ENCODE measurements at regions of chr18 and their contacts with region 1.

Region 1: GRCh38 chr18:48030616-48031480 is 100.4 kb upstream of the SMAD2 start:
- DNase-seq: peak; percentile 80
- H3K4me3 Mint-ChIP-seq: no peak overlapping the region
- H3K27ac Mint-ChIP-seq: no peak overlapping the region
- H3K4me1 Mint-ChIP-seq: peaks cover 25% of the 10 kb centered on the region
- H3K27me3 Mint-ChIP-seq: no peaks in the 10 kb centered on the region
- CTCF ChIP-seq: peak; percentile 76

Region 2: DNA sequence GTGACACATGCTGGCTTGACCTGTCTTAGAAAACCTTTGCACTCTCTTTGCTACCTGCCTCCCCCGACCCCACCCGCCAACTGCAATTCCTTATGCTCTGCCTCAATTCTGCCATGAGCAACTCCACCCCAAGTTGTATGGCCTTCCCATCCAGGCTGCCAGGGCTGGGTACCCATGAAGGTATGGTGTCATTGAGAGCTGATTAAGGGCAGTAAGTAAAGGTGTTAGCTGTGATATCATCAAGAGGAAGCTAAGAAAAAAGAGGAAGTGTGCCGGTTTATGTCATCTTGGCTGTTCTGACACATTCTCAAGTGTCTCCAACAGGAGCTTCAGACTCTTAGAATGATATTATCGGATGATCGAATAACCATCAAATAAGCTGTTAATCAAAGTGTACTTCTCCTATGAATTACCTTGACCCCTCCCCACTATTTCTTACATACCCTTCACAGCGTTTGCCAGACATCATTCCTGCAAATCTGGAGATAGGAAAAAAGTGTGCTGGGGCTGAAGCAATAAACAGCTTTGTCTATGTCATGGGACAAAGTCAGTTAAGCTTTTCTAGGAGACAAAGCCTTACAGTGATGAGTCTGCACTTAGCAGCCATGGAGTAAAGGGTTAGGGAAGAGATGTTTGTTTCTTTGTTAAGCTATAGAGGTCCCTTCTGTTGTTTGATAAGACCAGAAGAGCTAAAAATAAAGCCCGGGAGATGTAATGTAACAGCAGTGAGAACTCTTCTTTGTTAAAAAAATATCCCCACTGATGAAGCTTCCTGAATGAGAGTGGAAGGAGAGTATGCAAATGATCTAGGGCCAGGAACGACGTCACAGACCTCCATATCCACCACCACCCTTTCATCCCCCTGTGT is 60.0 kb before region 1 on chr18:
- CTCF ChIA-PET with region 1: no interaction called
- POLR2A ChIA-PET with region 1: no interaction called
- intact Hi-C with region 1: no loop called
- DNase-seq: no peak
- H3K4me3 Mint-ChIP-seq: no peak overlapping the region
- H3K27ac Mint-ChIP-seq: no peak overlapping the region
- H3K4me1 Mint-ChIP-seq: peaks cover 6% of the 10 kb centered on the region
- H3K27me3 Mint-ChIP-seq: peaks cover 23% of the 10 kb centered on the region
- CTCF ChIP-seq: no peak

Region 3: DNA sequence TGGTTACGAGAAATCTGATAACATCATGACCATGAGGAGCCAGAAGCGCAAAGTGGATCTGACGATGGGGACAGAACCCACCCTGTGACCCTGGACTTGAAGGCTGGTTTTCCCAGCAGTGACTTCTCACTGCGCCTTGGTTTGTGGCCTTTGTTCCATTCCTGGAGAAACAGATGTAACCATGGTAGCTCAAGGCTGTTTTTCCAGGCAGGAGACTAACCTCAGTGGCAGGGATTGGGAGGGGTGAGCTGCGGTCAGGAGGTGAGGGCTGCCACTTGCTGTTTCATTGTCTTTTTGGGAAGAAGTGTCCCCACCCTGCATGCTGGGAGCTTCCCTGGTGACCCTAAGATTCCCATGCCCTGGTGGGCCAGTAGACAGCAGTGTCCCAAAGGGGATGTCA is 16.0 kb after region 1 on chr18:
- CTCF ChIA-PET with region 1: interaction called, 15 read pairs
- POLR2A ChIA-PET with region 1: no interaction called
- intact Hi-C with region 1: no loop called
- DNase-seq: no peak
- H3K4me3 Mint-ChIP-seq: no peak overlapping the region
- H3K27ac Mint-ChIP-seq: no peak overlapping the region
- H3K4me1 Mint-ChIP-seq: no peaks in the 10 kb centered on the region
- H3K27me3 Mint-ChIP-seq: no peaks in the 10 kb centered on the region
- CTCF ChIP-seq: no peak

Region 4: GRCh38 chr18:48153641-48154481 is 123.0 kb after region 1 on chr18:
- CTCF ChIA-PET with region 1: interaction called, 6 read pairs
- POLR2A ChIA-PET with region 1: no interaction called
- intact Hi-C with region 1: loop called (anchors 10 kb)
- DNase-seq: peak; percentile 85
- H3K4me3 Mint-ChIP-seq: no peak overlapping the region
- H3K27ac Mint-ChIP-seq: peak overlapping the region; percentile 84
- H3K4me1 Mint-ChIP-seq: peaks cover 50% of the 10 kb centered on the region
- H3K27me3 Mint-ChIP-seq: no peaks in the 10 kb centered on the region
- CTCF ChIP-seq: no peak

Region 5: GRCh38 chr18:48230467-48231113 is 199.7 kb after region 1 on chr18:
- CTCF ChIA-PET with region 1: interaction called, 20 read pairs
- POLR2A ChIA-PET with region 1: no interaction called
- intact Hi-C with region 1: loop called (anchors 1 kb)
- DNase-seq: peak; percentile 78
- H3K4me3 Mint-ChIP-seq: no peak overlapping the region
- H3K27ac Mint-ChIP-seq: no peak overlapping the region
- H3K4me1 Mint-ChIP-seq: peaks cover 29% of the 10 kb centered on the region
- H3K27me3 Mint-ChIP-seq: peaks cover 8% of the 10 kb centered on the region
- CTCF ChIP-seq: peak; percentile 69

Region 6: GRCh38 chr18:48460929-48461583 is 430.2 kb after region 1 on chr18:
- CTCF ChIA-PET with region 1: interaction called, 19 read pairs
- POLR2A ChIA-PET with region 1: no interaction called
- intact Hi-C with region 1: no loop called
- DNase-seq: no peak
- H3K4me3 Mint-ChIP-seq: no peak overlapping the region
- H3K27ac Mint-ChIP-seq: no peak overlapping the region
- H3K4me1 Mint-ChIP-seq: peaks cover 2% of the 10 kb centered on the region
- H3K27me3 Mint-ChIP-seq: no peaks in the 10 kb centered on the region
- CTCF ChIP-seq: no peak

Measured in MCF 10A (cell line).